Ascending aorta (tissue), 2 donors: ENCODE measurements at regions of chr5 and their contacts with region 1.

Region 1: DNA sequence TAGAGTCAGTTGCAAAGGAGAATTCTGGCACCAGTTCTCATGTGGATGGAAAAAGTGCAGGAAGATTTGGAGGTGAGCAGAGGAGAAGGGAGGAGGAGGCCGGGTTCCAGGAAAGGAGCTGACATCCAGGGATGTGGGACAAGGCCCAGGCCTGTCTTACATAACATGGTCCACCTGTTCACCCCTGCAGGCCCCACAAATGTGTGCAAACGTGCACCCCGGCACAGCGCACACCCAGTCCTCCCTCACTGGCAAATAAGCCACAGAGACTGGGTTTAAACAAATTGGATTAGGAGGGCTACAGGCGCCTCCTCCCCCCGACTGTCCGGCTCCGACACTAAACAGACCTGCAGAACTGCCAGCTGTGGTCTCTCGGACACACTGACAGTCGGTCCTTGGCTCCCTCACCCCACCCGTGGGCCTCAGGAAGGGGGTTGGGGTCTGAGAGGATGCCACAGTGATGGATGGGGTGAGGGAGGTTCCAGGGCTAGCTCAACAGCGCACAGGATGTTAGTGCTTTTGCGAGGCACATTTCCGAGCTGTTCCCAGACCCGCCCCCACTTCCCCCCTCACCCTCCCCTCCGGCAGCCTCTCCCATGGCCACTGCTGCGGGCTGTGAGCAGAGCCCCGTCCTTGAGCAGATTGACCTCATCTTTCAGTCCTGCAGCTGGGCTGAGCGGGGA is 43.4 kb upstream of the IL17B start:
- DNase-seq: peak in 1 of 2 donors; percentile 76
- H3K4me3 ChIP-seq: peak overlapping the region in 1 of 2 donors; percentile 87
- H3K27ac ChIP-seq: peak overlapping the region; percentile 88 to 90
- H3K4me1 ChIP-seq: peaks cover 25 to 68% of the 10 kb centered on the region in 2 donors
- H3K27me3 ChIP-seq: no peaks in the 10 kb centered on the region
- CTCF ChIP-seq: no peak

Region 2: DNA sequence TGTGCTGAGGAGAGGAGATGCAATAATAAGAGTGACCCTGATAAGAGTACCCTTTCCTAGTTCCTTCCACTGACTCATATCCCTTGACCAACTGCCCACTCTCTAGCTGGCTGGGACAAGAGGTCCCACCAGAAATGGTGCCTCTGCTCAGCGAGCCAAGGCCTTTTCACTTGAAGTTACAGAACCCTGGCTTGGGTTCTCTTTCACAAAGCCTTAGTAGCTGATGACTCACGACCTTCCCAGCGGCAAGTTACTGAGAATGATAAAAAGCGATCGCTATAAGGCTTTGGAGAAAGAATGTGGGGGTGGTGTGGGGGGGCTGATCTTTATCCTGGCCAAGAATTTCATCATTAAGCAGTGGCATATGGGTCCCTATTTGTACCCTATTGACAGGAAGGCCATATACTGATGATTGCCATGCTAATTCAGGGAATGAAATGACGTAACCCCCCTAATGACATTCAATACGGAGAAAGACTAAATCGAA is 948.4 kb before region 1 on chr5:
- intact Hi-C with region 1: loop called (anchors 10 kb)
- DNase-seq: peak; percentile 23 to 90
- H3K4me3 ChIP-seq: peak overlapping the region; percentile 14 to 28
- H3K27ac ChIP-seq: peak overlapping the region; percentile 76 to 77
- H3K4me1 ChIP-seq: peaks cover 0 to 4% of the 10 kb centered on the region in 2 donors
- H3K27me3 ChIP-seq: no peaks in the 10 kb centered on the region
- CTCF ChIP-seq: no peak